Heart right ventricle (tissue), 16 donors: ENCODE measurements at regions of chr5 and their contacts with region 1.

Region 1: GRCh38 chr5:143066556-143067281 is 296.5 kb downstream of the ARHGAP26 start:
- DNase-seq: peak in 1 of 2 donors; percentile 43
- ATAC-seq: peak in 4 of 8 donors; percentile 3 to 21 (median 6)
- H3K4me3 ChIP-seq: no peak overlapping the region
- H3K27ac ChIP-seq: peak overlapping the region in 7 of 10 donors; percentile 19 to 85 (median 36)
- H3K4me1 ChIP-seq: peaks cover 9 to 60% (median 54%) of the 10 kb centered on the region in 9 donors
- H3K27me3 ChIP-seq: no peaks in the 10 kb centered on the region
- CTCF ChIP-seq: no peak

Region 2: DNA sequence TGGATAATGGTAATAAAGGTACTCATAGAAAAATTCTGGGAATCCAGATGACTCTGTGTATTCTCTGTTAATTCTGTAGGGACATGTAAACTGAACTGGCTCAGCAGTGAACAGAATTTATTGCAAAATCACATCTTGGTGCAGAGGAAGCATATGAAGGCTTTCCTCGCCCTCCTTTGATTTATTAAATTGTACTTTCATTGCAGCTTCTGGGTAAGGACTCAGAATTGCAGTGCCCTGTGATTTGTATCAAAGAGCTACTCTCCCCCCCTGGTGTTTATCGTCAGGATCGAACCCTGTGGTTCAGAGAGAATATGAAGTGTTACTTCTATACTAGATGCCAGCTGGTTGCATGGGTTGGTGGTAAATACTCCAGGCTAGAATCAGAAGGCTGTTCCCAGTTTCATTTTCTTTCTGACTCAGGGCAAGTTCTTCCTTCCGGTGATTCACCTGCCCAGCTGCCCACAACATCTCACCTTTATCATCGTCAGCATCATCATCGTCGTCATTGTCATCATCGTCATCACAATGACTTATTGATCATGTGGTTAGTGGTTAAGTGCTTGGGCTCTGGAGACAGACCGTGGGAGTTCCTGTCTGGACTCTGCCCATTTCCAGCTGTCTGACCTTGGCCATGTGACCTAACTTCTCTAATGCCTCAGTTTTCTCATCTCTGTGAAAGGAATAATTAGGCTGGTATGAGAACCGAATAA is 57.8 kb before region 1 on chr5:
- intact Hi-C with region 1: loop called in 2 of 10 experiments (anchors 5 to 10 kb)
- DNase-seq: peak in 1 of 2 donors; percentile 32
- ATAC-seq: peak in 6 of 8 donors; percentile 18 to 64 (median 42)
- H3K4me3 ChIP-seq: no peak overlapping the region
- H3K27ac ChIP-seq: peak overlapping the region in 5 of 10 donors; percentile 20 to 77 (median 69)
- H3K4me1 ChIP-seq: peaks cover 7 to 69% (median 57%) of the 10 kb centered on the region in 9 donors
- H3K27me3 ChIP-seq: no peaks in the 10 kb centered on the region
- CTCF ChIP-seq: peak in 1 of 9 donors; percentile 26

Region 3: DNA sequence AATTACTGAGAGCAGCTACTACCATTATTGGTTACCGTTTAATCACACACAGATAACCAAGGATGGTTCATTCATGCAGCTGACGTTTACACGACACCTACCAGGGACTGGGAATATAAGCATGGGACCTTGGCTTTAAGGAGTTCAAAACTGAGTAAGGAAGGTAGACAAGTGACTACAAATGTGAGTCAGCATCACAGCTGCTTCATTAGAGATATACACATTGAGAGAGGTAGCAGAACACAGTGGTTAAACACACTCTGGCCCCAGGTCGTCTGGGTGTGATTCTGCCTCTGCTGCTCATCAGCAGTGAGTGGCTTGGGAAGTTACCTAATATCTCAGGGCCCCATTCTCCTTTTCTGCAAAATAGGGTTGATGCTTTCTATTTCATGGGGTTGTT is 68.2 kb after region 1 on chr5:
- intact Hi-C with region 1: loop called in 1 of 10 experiments (anchors 10 kb)
- DNase-seq: no peak
- ATAC-seq: no peak
- H3K4me3 ChIP-seq: no peak overlapping the region
- H3K27ac ChIP-seq: peak overlapping the region in 3 of 10 donors; percentile 31 to 69 (median 46)
- H3K4me1 ChIP-seq: peaks cover 6 to 90% (median 40%) of the 10 kb centered on the region in 9 donors
- H3K27me3 ChIP-seq: no peaks in the 10 kb centered on the region
- CTCF ChIP-seq: no peak